KBM-7 (cell line): ENCODE measurements at regions of chr10 and their contacts with region 1.

Region 1: GRCh38 chr10:89278034-89278535 is 23.8 kb upstream of the IFIT2 start:
- DNase-seq: no peak

Region 2: GRCh38 chr10:89369156-89370105 is 91.3 kb after region 1 on chr10:
- in situ Hi-C with region 1: loop called (anchors 10 kb)
- DNase-seq: peak; percentile 62

Region 3: GRCh38 chr10:90319188-90319914 is 1041.3 kb after region 1 on chr10:
- in situ Hi-C with region 1: no loop called
- DNase-seq: no peak